Naive thymus-derived CD8-positive, alpha-beta T cell (primary cell): ENCODE measurements at regions of chr14 and their contacts with region 1.

Region 1: GRCh38 chr14:24215495-24216344 is at the start of gene MDP1:
- DNase-seq: peak; percentile 71 to 93 (median 86)
- ATAC-seq: peak; percentile 75
- H3K4me3 Mint-ChIP-seq: peak within 1 kb of the TSS; percentile 89 to 94 (median 92)
- H3K27ac Mint-ChIP-seq: peak within 1 kb of the TSS; percentile 93 to 100 (median 99)
- H3K4me1 Mint-ChIP-seq: peaks cover 27 to 55% (median 54%) of the 10 kb centered on the region in 4 donors
- H3K27me3 Mint-ChIP-seq: peaks cover 0 to 2% (median 0%) of the 10 kb centered on the region in 5 donors
- polyA plus RNA-seq, gene MDP1: 33.8 to 39.1 (median 34.5) TPM

Region 2: GRCh38 chr14:24080888-24081738 is 134.6 kb before region 1 on chr14:
- POLR2A ChIA-PET with region 1: interaction called, 11 read pairs
- DNase-seq: peak; percentile 45 to 84 (median 66)
- ATAC-seq: peak; percentile 90
- H3K4me3 Mint-ChIP-seq: peak overlapping the region; percentile 84 to 94 (median 87)
- H3K27ac Mint-ChIP-seq: peak overlapping the region; percentile 67 to 95 (median 90)
- H3K4me1 Mint-ChIP-seq: peaks cover 13 to 28% (median 22%) of the 10 kb centered on the region in 4 donors
- H3K27me3 Mint-ChIP-seq: no peaks in the 10 kb centered on the region

Region 3: GRCh38 chr14:24135834-24136542 is 79.7 kb before region 1 on chr14 and contains the start of gene PSME1:
- POLR2A ChIA-PET with region 1: interaction called, 13 read pairs
- DNase-seq: peak; percentile 88 to 96 (median 94)
- ATAC-seq: peak; percentile 88 to 94
- H3K4me3 Mint-ChIP-seq: peak within 1 kb of the TSS; percentile 87 to 98 (median 93)
- H3K27ac Mint-ChIP-seq: peak within 1 kb of the TSS; percentile 86 to 97 (median 94)
- H3K4me1 Mint-ChIP-seq: peaks cover 34 to 69% (median 66%) of the 10 kb centered on the region in 4 donors
- H3K27me3 Mint-ChIP-seq: no peaks in the 10 kb centered on the region
- polyA plus RNA-seq, gene PSME1: 681 to 767 (median 753) TPM

Region 4: DNA sequence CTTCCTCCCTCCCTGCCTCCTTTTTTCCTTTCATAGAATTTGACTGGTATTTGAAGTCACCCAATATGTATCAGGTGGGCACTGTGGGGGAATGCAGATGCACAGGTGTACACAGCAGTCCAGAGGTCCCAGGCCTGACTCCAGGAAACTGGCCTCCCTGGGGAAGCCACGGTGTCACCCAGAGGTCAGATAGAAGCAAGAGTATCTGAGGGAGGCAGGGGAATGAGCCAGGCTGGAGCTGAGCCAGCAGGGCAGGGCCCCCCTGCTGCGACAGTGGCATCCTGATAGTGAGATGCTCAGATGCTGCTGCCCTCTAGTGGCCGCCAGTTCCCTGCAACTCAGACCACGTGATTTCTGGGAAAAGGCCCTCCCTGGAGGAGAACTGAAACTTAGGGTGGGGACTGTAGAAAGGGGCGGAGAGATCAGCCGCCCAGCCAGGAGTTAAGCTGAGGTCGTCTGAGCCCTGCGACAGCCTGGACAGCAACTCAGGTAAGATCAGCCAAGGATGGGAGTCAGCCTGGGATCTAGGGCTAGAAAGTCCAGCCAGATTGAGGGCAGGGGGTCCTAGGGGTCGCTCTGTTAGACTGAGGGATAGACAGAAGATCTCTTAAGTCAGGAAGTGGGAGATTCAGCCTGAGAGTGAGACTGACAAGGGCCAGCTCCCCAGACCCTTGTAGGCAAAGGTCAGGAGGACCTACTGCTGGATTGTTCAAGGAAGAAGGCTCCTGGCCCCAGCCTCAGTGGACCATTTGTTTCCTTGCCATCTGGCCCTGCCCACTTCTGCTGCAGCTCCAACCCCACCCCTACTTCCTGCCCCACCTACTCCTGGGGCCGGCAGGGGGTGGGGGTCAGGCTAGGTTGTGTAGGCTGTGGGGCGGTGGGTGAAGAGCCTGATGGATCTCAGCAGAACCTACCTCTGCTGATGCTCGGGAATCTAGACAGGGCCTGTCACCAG is 54.6 kb before region 1 on chr14 and contains the start of gene IRF9:
- POLR2A ChIA-PET with region 1: interaction called, 30 read pairs
- DNase-seq: peak; percentile 94 to 99 (median 97)
- ATAC-seq: peak; percentile 89 to 90
- H3K4me3 Mint-ChIP-seq: peak within 1 kb of the TSS; percentile 95 to 100 (median 98)
- H3K27ac Mint-ChIP-seq: peak within 1 kb of the TSS; percentile 92 to 100 (median 99)
- H3K4me1 Mint-ChIP-seq: peaks cover 27 to 64% (median 55%) of the 10 kb centered on the region in 4 donors
- H3K27me3 Mint-ChIP-seq: peaks cover 0 to 2% (median 0%) of the 10 kb centered on the region in 5 donors
- polyA plus RNA-seq, gene IRF9: 46.6 to 68.6 (median 51.3) TPM

Region 5: GRCh38 chr14:24195191-24196070 is 20.3 kb before region 1 on chr14 and contains the start of gene TM9SF1:
- POLR2A ChIA-PET with region 1: interaction called, 124 read pairs
- DNase-seq: peak; percentile 81 to 95 (median 90)
- ATAC-seq: peak; percentile 87 to 88
- H3K4me3 Mint-ChIP-seq: peak within 1 kb of the TSS; percentile 84 to 98 (median 93)
- H3K27ac Mint-ChIP-seq: peak within 1 kb of the TSS; percentile 93 to 99 (median 98)
- H3K4me1 Mint-ChIP-seq: peaks cover 24 to 64% (median 62%) of the 10 kb centered on the region in 4 donors
- H3K27me3 Mint-ChIP-seq: no peaks in the 10 kb centered on the region
- polyA plus RNA-seq, gene TM9SF1: 23.1 to 29.8 (median 29.1) TPM

Region 6: DNA sequence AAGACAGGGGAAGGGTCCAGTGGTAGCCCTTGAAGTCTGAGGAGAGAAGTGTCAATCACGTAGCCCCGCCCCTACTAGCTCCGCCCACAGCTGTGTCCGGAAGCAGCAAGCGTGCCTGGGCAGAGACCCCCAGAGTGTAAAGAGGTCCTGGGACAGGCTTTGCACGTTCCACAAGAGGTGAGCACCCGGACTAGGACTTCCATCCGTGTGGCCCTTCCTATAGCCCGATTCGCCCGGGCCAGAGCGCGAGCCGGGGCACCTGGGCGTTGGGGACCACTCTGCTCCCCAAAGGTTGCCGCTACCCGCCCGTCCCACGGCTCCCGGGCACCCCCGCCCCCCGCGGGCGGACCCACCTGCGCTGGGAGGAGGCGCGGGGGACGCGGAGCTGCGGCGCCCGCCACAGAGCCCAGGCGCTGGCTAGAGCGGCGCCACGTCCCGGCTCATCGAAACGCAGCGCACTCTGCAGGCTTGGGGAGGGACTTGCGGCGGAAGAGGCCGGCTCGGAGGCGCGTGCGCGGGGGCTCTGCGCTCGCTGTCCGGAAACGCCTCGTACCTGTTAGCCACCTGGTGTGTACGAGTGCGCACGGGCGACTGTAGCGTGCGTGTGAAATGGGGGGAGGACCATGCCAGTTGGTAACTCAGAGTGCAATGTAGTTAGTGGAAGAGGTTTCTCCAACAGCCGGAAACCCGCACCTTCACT is 55.6 kb after region 1 on chr14 and contains the start of gene RABGGTA:
- POLR2A ChIA-PET with region 1: interaction called, 46 read pairs
- DNase-seq: peak; percentile 87 to 98 (median 94)
- ATAC-seq: peak; percentile 86 to 91
- H3K4me3 Mint-ChIP-seq: peak within 1 kb of the TSS; percentile 78 to 94 (median 92)
- H3K27ac Mint-ChIP-seq: peak within 1 kb of the TSS; percentile 92 to 100 (median 99)
- H3K4me1 Mint-ChIP-seq: peaks cover 31 to 45% (median 41%) of the 10 kb centered on the region in 4 donors
- H3K27me3 Mint-ChIP-seq: no peaks in the 10 kb centered on the region
- polyA plus RNA-seq, gene RABGGTA: 12.7 to 22.1 (median 20.4) TPM